Mammary epithelial cell (primary cell): ENCODE measurements at regions of chr9 and their contacts with region 1.

Region 1: GRCh38 chr9:84305452-84306131 is 35.0 kb downstream of the SLC28A3 start:
- DNase-seq: no peak
- H3K4me3 ChIP-seq: no peak overlapping the region
- H3K27ac ChIP-seq: no peak overlapping the region
- H3K4me1 ChIP-seq: peaks cover 12% of the 10 kb centered on the region
- H3K27me3 ChIP-seq: no peaks in the 10 kb centered on the region
- CTCF ChIP-seq: no peak

Region 2: DNA sequence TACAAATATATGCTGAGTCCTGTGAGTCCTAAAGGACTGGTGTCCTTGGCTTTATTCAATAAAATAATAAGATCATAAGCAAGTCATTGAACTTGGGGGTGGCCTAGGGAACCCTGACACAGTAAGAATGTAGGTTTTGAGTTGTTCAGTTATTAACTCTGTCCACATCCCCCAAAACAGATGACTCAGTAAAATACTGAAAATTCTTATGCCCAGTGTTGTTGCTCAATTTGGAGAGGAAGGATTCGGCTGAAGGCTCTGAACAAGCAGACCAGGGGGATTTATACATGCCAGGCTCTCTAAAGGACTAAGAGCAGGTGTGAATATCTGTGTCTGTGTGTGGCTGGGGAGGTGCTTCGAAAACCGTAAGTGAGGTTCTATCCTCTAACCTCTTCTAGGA is 151.3 kb before region 1 on chr9:
- CTCF ChIA-PET with region 1: no interaction called
- dilution Hi-C with region 1: no loop called
- in situ Hi-C with region 1: no loop called
- intact Hi-C with region 1: no loop called
- DNase-seq: no peak
- H3K4me3 ChIP-seq: no peak overlapping the region
- H3K27ac ChIP-seq: no peak overlapping the region
- H3K4me1 ChIP-seq: no peaks in the 10 kb centered on the region
- H3K27me3 ChIP-seq: no peaks in the 10 kb centered on the region
- CTCF ChIP-seq: no peak

Region 3: DNA sequence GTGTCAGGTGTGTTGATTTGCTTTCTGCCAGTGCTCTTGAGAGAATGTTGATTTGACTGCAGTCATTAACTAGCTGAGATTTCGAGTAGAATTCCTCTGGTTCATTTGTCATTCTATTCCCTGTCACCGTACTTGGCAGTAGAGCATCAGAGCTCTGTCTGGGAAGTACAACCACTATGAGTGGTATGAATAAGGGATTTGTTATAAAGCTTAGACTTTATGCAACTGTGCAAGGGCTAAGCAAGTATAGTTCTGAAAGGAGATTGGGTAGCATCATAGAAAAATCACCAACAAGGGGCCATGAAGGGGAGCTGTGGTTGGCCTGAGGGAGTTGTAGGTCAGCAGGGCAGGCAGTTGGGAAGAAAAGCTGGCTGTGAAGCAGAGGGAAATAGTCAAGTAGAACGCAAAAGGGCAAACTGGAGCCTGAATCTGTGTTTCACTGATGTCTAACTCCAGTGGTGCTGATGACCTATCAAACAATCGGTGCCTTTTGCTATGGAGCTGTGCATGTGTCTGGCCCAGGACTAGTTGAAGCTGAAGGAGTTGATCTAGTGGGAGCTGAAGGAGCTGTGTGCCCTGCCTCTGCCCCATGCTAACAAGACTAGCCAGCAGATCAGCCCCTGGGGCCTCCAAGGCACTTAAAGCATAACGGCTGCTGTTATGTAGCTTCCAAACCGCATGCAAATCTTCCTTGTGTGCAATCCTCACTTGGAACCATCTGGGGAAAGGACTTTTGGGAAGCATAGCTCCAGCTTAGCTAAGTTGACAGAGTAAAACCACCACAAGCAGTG is 75.0 kb before region 1 on chr9:
- CTCF ChIA-PET with region 1: no interaction called
- dilution Hi-C with region 1: loop called (anchors 5 kb)
- in situ Hi-C with region 1: no loop called
- intact Hi-C with region 1: no loop called
- DNase-seq: no peak
- H3K4me3 ChIP-seq: no peak overlapping the region
- H3K27ac ChIP-seq: no peak overlapping the region
- H3K4me1 ChIP-seq: no peaks in the 10 kb centered on the region
- H3K27me3 ChIP-seq: peaks cover 2% of the 10 kb centered on the region
- CTCF ChIP-seq: no peak

Region 4: DNA sequence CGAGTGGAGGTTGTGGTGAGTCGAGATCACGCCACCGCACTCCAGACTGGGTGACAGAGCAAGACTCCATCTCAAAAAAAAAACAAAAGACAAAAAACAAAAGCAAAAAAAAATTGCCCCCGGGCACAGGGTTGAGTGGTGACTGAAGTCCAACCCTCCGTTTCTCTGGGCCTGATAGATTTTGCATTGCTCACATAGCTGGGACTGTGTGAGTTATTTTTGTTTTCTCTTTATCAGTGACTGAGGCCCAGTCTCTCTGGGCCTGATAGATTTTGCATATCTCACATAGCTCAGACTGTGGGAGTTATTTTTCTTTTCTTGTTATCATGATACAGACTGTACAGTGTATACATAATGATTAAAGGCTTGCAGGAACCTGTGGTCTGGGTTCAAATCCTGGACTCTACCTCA is 37.5 kb after region 1 on chr9:
- CTCF ChIA-PET with region 1: no interaction called
- dilution Hi-C with region 1: no loop called
- in situ Hi-C with region 1: no loop called
- intact Hi-C with region 1: no loop called
- DNase-seq: no peak
- H3K4me3 ChIP-seq: no peak overlapping the region
- H3K27ac ChIP-seq: no peak overlapping the region
- H3K4me1 ChIP-seq: peaks cover 4% of the 10 kb centered on the region
- H3K27me3 ChIP-seq: no peaks in the 10 kb centered on the region
- CTCF ChIP-seq: no peak

Region 5: GRCh38 chr9:84481636-84482218 is 176.1 kb after region 1 on chr9:
- CTCF ChIA-PET with region 1: no interaction called
- dilution Hi-C with region 1: no loop called
- in situ Hi-C with region 1: no loop called
- intact Hi-C with region 1: no loop called
- DNase-seq: no peak
- H3K4me3 ChIP-seq: no peak overlapping the region
- H3K27ac ChIP-seq: no peak overlapping the region
- H3K4me1 ChIP-seq: no peaks in the 10 kb centered on the region
- H3K27me3 ChIP-seq: no peaks in the 10 kb centered on the region
- CTCF ChIP-seq: no peak